ENCODE measurements at regions of chr5 and their contacts with region 1.

Region 1: DNA sequence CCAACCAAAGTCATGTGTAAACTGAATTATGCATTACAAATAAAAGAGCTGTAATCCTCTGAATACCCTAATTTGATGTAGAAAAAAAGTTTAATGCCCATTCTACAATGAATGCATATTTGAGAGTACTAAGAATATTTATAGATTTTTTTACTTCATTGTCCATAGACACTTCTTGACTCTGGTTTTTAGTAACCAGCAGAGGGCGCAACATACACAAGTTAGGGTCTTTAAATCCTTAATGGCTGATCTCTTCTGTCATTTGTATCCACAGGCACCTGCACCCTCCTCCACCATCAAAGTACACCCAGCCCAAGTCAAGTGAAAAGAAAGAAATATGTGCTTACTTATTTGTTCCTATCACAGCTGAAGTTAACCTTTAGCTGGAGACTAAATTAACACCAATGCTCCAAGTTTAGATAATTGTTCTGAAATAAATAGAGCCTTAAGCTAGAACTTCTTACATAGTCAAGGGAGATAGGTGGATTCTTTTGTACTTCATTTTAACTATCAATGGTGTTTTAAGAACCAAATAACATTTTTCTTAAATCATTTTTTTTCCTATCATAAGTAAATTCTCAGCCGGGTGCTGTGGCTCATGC is 524.2 kb upstream of the DAB2 start:
- DNase-seq: no peak
- ATAC-seq: peak; percentile 83
- H3K4me3 Mint-ChIP-seq: no peak overlapping the region
- H3K27ac Mint-ChIP-seq: no peak overlapping the region
- H3K4me1 Mint-ChIP-seq: peaks cover 3% of the 10 kb centered on the region
- H3K27me3 Mint-ChIP-seq: no peaks in the 10 kb centered on the region
- CTCF ChIP-seq: no peak

Region 2: GRCh38 chr5:39578887-39579497 is 370.0 kb before region 1 on chr5:
- CTCF ChIA-PET with region 1: interaction called, 4 read pairs
- POLR2A ChIA-PET with region 1: no interaction called
- intact Hi-C with region 1: loop called (anchors 5 kb)
- DNase-seq: no peak
- ATAC-seq: no peak
- H3K4me3 Mint-ChIP-seq: no peak overlapping the region
- H3K27ac Mint-ChIP-seq: no peak overlapping the region
- H3K4me1 Mint-ChIP-seq: peaks cover 8% of the 10 kb centered on the region
- H3K27me3 Mint-ChIP-seq: peaks cover 2% of the 10 kb centered on the region
- CTCF ChIP-seq: peak; percentile 63

Region 3: DNA sequence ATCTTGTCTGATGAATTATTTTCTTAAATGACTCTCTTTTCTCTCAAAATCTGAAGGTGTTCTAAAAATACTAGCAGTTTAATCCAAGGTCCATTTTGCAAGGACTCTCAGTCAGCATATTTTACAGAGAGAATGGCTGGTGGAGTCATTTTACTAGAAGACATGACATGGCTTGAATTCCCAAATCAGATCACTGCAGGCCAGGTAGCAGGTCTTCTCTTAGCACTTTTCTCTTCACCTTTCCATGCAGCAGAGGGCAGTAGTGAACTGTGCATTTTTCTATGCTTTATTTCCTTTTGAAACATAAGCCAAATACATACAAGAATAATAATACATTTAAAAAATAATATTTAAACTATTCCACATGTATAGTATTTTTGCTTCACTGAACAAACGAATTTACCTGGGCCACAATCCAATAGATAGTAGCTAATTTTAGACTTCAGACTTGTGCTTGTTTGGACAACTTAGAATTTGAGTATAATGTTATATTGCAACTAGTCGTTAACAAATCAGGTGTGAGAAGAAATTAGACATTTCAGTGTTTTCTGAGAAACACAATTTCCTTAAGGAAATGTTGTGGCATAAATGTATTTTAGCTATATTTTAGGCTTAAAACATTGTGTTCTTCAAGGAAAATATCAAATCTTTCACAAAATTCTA is 234.8 kb before region 1 on chr5:
- CTCF ChIA-PET with region 1: interaction called, 4 read pairs
- POLR2A ChIA-PET with region 1: no interaction called
- intact Hi-C with region 1: loop called (anchors 5 kb)
- DNase-seq: no peak
- ATAC-seq: peak; percentile 45
- H3K4me3 Mint-ChIP-seq: no peak overlapping the region
- H3K27ac Mint-ChIP-seq: no peak overlapping the region
- H3K4me1 Mint-ChIP-seq: no peaks in the 10 kb centered on the region
- H3K27me3 Mint-ChIP-seq: no peaks in the 10 kb centered on the region
- CTCF ChIP-seq: no peak

Region 4: GRCh38 chr5:40347981-40348725 is 399.2 kb after region 1 on chr5:
- CTCF ChIA-PET with region 1: no interaction called
- POLR2A ChIA-PET with region 1: no interaction called
- intact Hi-C with region 1: loop called (anchors 5 kb)
- DNase-seq: no peak
- ATAC-seq: no peak
- H3K4me3 Mint-ChIP-seq: no peak overlapping the region
- H3K27ac Mint-ChIP-seq: no peak overlapping the region
- H3K4me1 Mint-ChIP-seq: no peaks in the 10 kb centered on the region
- H3K27me3 Mint-ChIP-seq: no peaks in the 10 kb centered on the region
- CTCF ChIP-seq: no peak

Region 5: DNA sequence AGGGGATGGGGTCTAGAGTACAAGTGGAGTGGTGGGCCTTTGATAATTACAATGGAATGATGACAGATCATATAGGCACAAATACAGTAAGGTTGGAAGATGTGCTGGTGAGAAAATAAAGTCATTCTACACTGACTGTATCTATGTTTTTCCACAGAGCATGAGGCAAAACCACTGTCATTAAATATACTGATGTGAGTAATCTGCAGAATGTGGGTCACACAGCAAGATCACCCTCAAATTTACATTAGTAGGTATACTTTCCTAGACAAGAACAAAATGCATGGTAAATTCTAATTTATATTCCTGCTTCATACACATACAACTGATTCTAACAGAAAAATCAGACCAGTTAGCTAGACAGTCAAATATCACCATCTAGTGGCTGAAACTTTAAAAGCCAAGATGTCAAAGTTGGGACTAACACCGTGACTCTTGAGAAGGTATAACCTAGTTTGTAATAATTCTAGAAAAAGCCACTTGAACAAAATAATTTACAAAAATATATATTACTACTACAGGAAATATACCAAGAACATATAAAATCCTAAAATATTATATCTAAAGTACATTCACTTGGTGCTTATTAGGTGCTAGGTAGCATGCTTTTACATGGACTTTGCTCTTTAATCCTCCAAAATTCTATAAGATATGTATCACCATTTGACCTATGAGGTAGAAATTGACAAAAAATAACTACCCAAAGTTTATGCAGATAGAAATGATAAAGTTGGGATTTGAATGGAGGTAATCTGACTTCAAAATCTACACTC is 787.3 kb after region 1 on chr5:
- CTCF ChIA-PET with region 1: interaction called, 32 read pairs
- POLR2A ChIA-PET with region 1: no interaction called
- intact Hi-C with region 1: loop called (anchors 1 kb)
- DNase-seq: no peak
- ATAC-seq: peak; percentile 42
- H3K4me3 Mint-ChIP-seq: no peak overlapping the region
- H3K27ac Mint-ChIP-seq: no peak overlapping the region
- H3K4me1 Mint-ChIP-seq: no peaks in the 10 kb centered on the region
- H3K27me3 Mint-ChIP-seq: no peaks in the 10 kb centered on the region
- CTCF ChIP-seq: no peak

Measured in activated B cell treated with CpG ODN at 0.5 μM for 24 hours (primary cell).